ENCODE measurements at regions of chr1 and their contacts with region 1.

Region 1: GRCh38 chr1:26169669-26170471 is at the start of gene ZNF593:
- DNase-seq: peak; percentile 61 to 91 (median 77)
- ATAC-seq: peak; percentile 86
- H3K4me3 ChIP-seq: peak within 1 kb of the TSS; percentile 85
- H3K4me3 Mint-ChIP-seq: peak within 1 kb of the TSS; percentile 90
- H3K27ac ChIP-seq: peak within 1 kb of the TSS; percentile 58 to 71
- H3K27ac Mint-ChIP-seq: peak within 1 kb of the TSS; percentile 61
- H3K4me1 ChIP-seq: peaks cover 26% of the 10 kb centered on the region
- H3K4me1 Mint-ChIP-seq: peaks cover 12% of the 10 kb centered on the region
- H3K27me3 ChIP-seq: no peaks in the 10 kb centered on the region
- H3K27me3 Mint-ChIP-seq: no peaks in the 10 kb centered on the region
- CTCF ChIP-seq: peak; percentile 90
- total RNA-seq, gene ZNF593: 5.0 to 6.6 TPM

Region 2: DNA sequence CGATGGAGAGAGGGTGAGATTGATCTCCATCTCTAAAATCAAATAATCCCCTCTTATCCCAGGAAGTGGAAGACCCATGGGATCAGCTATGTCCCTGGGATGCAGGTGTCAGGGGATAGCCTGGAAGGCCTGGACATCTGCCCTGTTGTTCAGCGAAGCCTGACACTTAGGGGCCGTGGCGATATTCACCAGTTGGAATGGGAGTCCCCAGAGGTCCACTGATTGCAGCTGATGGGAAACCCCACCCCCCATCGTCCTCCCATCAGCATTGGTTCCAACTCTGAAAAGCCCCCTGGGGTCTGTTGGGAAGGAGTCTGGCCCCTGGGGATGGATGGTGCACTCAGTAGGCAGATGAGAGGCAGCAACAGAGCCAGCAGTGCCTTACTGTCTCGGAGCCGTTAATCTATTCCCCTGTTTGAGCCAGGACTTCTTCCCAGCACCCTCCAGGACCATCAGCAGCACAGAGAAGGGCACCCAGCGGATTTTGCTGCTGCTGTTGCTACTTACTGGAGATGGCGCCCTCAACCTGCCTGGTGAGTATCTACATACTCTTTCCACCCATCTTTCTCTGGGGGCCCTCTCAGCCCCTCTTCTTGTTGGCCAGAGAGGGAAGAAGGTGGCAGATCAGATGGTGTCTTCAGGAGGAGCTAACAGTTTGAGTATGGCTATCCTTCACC is 33.9 kb after region 1 on chr1:
- CTCF ChIA-PET with region 1: interaction called, 4 read pairs
- POLR2A ChIA-PET with region 1: interaction called, 11 read pairs
- intact Hi-C with region 1: no loop called
- DNase-seq: no peak
- ATAC-seq: no peak
- H3K4me3 ChIP-seq: no peak overlapping the region
- H3K4me3 Mint-ChIP-seq: no peak overlapping the region
- H3K27ac ChIP-seq: no peak overlapping the region
- H3K27ac Mint-ChIP-seq: no peak overlapping the region
- H3K4me1 ChIP-seq: peaks cover 34% of the 10 kb centered on the region
- H3K4me1 Mint-ChIP-seq: peaks cover 23% of the 10 kb centered on the region
- H3K27me3 ChIP-seq: no peaks in the 10 kb centered on the region
- H3K27me3 Mint-ChIP-seq: no peaks in the 10 kb centered on the region
- CTCF ChIP-seq: no peak

Region 3: GRCh38 chr1:26363549-26364448 is 193.9 kb after region 1 on chr1:
- CTCF ChIA-PET with region 1: no interaction called
- POLR2A ChIA-PET with region 1: no interaction called
- intact Hi-C with region 1: loop called in 1 of 2 experiments (anchors 10 kb)
- DNase-seq: peak; percentile 74 to 96 (median 84)
- ATAC-seq: peak; percentile 61
- H3K4me3 ChIP-seq: no peak overlapping the region
- H3K4me3 Mint-ChIP-seq: peak overlapping the region; percentile 69
- H3K27ac ChIP-seq: no peak overlapping the region
- H3K27ac Mint-ChIP-seq: no peak overlapping the region
- H3K4me1 ChIP-seq: peaks cover 79% of the 10 kb centered on the region
- H3K4me1 Mint-ChIP-seq: peaks cover 56% of the 10 kb centered on the region
- H3K27me3 ChIP-seq: peaks cover 0 to 21% of the 10 kb centered on the region in 2 experiments
- H3K27me3 Mint-ChIP-seq: peaks cover 28% of the 10 kb centered on the region
- CTCF ChIP-seq: peak; percentile 98

Region 4: GRCh38 chr1:26391450-26391849 is 221.6 kb after region 1 on chr1:
- CTCF ChIA-PET with region 1: interaction called, 5 read pairs
- POLR2A ChIA-PET with region 1: no interaction called
- intact Hi-C with region 1: loop called in 1 of 2 experiments (anchors 10 kb)
- DNase-seq: peak in 12 of 14 experiments; percentile 21 to 80 (median 36)
- ATAC-seq: peak; percentile 69
- H3K4me3 ChIP-seq: no peak overlapping the region
- H3K4me3 Mint-ChIP-seq: no peak overlapping the region
- H3K27ac ChIP-seq: no peak overlapping the region
- H3K27ac Mint-ChIP-seq: no peak overlapping the region
- H3K4me1 ChIP-seq: peaks cover 41% of the 10 kb centered on the region
- H3K4me1 Mint-ChIP-seq: peaks cover 20% of the 10 kb centered on the region
- H3K27me3 ChIP-seq: no peaks in the 10 kb centered on the region
- H3K27me3 Mint-ChIP-seq: no peaks in the 10 kb centered on the region
- CTCF ChIP-seq: peak; percentile 68